ENCODE measurements at regions of chr1 and their contacts with region 1.

Region 1: GRCh38 chr1:64136752-64137411 is 66.5 kb upstream of the UBE2U start:
- DNase-seq: peak; percentile 42 to 61 (median 47)
- H3K4me3 ChIP-seq: no peak overlapping the region
- H3K4me3 Mint-ChIP-seq: no peak overlapping the region
- H3K27ac ChIP-seq: no peak overlapping the region
- H3K27ac Mint-ChIP-seq: no peak overlapping the region
- H3K4me1 ChIP-seq: no peaks in the 10 kb centered on the region
- H3K4me1 Mint-ChIP-seq: no peaks in the 10 kb centered on the region
- H3K27me3 ChIP-seq: no peaks in the 10 kb centered on the region
- H3K27me3 Mint-ChIP-seq: peaks cover under 1 to 13% of the 10 kb centered on the region in 2 donors

Region 2: DNA sequence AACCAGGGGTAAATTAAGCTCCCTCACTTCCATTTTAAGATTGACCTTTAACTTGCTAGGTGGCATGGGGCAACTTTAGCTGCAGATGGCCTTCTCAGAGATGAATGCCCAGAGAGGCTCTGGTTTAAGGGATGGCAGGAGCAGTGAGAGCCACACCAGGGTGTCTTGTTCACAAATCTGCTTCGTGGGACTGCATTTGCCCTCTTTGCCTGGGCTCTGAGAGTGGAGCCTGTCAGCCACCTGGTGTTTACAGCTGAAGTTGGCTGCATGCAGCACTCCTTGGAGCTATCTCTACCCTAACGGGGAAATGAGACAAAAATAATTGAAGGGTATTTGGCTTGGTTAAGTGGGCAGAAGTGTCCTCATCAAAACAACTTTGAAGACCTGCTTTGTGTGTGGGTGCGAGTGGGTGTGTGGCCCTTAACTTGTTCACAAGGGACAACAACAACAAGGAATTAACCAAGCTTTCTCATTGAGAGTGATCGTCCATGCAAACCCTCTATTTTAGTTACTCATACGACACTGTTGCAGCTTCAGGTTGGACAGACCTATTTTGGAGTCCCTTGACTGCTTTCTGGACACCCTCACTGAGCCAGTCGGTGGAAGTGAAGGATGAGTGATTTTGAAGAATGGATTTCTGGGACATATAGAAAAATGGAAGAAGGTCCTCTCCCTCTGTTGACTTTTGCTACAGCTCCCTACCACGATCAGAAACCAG is 513.9 kb before region 1 on chr1:
- CTCF ChIA-PET with region 1: interaction called, 18 read pairs
- POLR2A ChIA-PET with region 1: no interaction called
- intact Hi-C with region 1: no loop called
- DNase-seq: no peak
- H3K4me3 ChIP-seq: no peak overlapping the region
- H3K4me3 Mint-ChIP-seq: no peak overlapping the region
- H3K27ac ChIP-seq: no peak overlapping the region
- H3K27ac Mint-ChIP-seq: peak overlapping the region in 1 of 7 donors; percentile 29
- H3K4me1 ChIP-seq: no peaks in the 10 kb centered on the region
- H3K4me1 Mint-ChIP-seq: peaks cover 1 to 15% (median 9%) of the 10 kb centered on the region in 4 donors
- H3K27me3 ChIP-seq: no peaks in the 10 kb centered on the region
- H3K27me3 Mint-ChIP-seq: no peaks in the 10 kb centered on the region

Region 3: GRCh38 chr1:63922848-63923247 is 214.0 kb before region 1 on chr1:
- CTCF ChIA-PET with region 1: no interaction called
- POLR2A ChIA-PET with region 1: no interaction called
- intact Hi-C with region 1: no loop called
- DNase-seq: no peak
- H3K4me3 ChIP-seq: no peak overlapping the region
- H3K4me3 Mint-ChIP-seq: no peak overlapping the region
- H3K27ac ChIP-seq: no peak overlapping the region
- H3K27ac Mint-ChIP-seq: no peak overlapping the region
- H3K4me1 ChIP-seq: no peaks in the 10 kb centered on the region
- H3K4me1 Mint-ChIP-seq: no peaks in the 10 kb centered on the region
- H3K27me3 ChIP-seq: no peaks in the 10 kb centered on the region
- H3K27me3 Mint-ChIP-seq: peaks cover 0 to 5% of the 10 kb centered on the region in 2 donors

Region 4: GRCh38 chr1:64121766-64122385 is 15.0 kb before region 1 on chr1:
- CTCF ChIA-PET with region 1: interaction called, 25 read pairs
- POLR2A ChIA-PET with region 1: no interaction called
- intact Hi-C with region 1: no loop called
- DNase-seq: no peak
- H3K4me3 ChIP-seq: no peak overlapping the region
- H3K4me3 Mint-ChIP-seq: no peak overlapping the region
- H3K27ac ChIP-seq: no peak overlapping the region
- H3K27ac Mint-ChIP-seq: peak overlapping the region in 1 of 7 donors; percentile 74
- H3K4me1 ChIP-seq: no peaks in the 10 kb centered on the region
- H3K4me1 Mint-ChIP-seq: no peaks in the 10 kb centered on the region
- H3K27me3 ChIP-seq: no peaks in the 10 kb centered on the region
- H3K27me3 Mint-ChIP-seq: peaks cover 4 to 9% of the 10 kb centered on the region in 2 donors

Region 5: GRCh38 chr1:64161357-64161941 is 24.6 kb after region 1 on chr1:
- CTCF ChIA-PET with region 1: interaction called, 10 read pairs
- POLR2A ChIA-PET with region 1: no interaction called
- intact Hi-C with region 1: no loop called
- DNase-seq: no peak
- H3K4me3 ChIP-seq: no peak overlapping the region
- H3K4me3 Mint-ChIP-seq: no peak overlapping the region
- H3K27ac ChIP-seq: no peak overlapping the region
- H3K27ac Mint-ChIP-seq: no peak overlapping the region
- H3K4me1 ChIP-seq: no peaks in the 10 kb centered on the region
- H3K4me1 Mint-ChIP-seq: no peaks in the 10 kb centered on the region
- H3K27me3 ChIP-seq: no peaks in the 10 kb centered on the region
- H3K27me3 Mint-ChIP-seq: peaks cover 2 to 15% of the 10 kb centered on the region in 2 donors

Region 6: DNA sequence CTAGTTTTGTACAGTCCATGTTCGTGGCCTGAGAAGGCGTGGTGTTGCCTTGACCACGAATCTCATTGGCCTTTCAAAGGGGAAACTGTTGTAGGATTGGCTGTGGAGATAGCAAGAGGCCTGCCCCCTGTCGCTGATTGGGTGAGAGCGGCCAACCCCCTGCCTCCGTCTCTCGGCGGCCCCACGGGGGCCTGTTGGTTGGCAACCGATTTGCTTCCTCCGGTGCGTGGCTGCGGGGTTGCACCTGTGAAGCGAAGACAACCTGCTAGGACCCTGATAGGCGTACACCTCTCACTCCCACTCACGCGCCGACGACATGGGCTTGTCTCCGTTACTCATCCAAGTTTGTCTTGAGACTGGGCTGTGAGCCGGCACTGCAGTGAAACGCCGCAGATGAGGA is 66.5 kb after region 1 on chr1 and contains the start of gene UBE2U:
- CTCF ChIA-PET with region 1: no interaction called
- POLR2A ChIA-PET with region 1: no interaction called
- intact Hi-C with region 1: no loop called
- DNase-seq: no peak
- H3K4me3 ChIP-seq: no peak within 1 kb of the TSS
- H3K4me3 Mint-ChIP-seq: no peak within 1 kb of the TSS
- H3K27ac ChIP-seq: no peak within 1 kb of the TSS
- H3K27ac Mint-ChIP-seq: no peak within 1 kb of the TSS
- H3K4me1 ChIP-seq: no peaks in the 10 kb centered on the region
- H3K4me1 Mint-ChIP-seq: peaks cover 0 to 1% (median 0%) of the 10 kb centered on the region in 4 donors
- H3K27me3 ChIP-seq: no peaks in the 10 kb centered on the region
- H3K27me3 Mint-ChIP-seq: peaks cover 3 to 6% of the 10 kb centered on the region in 2 donors
- total RNA-seq, gene UBE2U: not detected

Region 7: DNA sequence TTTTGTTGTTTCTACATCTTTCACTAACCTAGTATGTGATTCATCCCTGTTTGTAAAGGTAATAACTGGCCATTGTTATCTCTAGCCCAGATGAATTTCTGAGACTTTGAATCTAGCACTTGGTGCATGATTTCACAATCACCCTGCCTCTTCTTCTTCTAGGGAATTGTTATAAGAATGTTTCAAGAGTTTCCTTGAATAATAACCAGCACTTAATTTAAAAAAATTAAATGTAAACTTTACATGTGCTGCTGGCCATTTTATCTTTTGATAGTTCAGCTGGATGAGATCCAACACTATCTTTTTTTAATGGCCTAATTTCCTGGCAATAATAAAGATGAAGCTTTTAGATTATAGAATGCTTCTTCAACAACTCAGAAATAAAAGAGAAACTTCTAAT is 98.3 kb after region 1 on chr1:
- CTCF ChIA-PET with region 1: no interaction called
- POLR2A ChIA-PET with region 1: no interaction called
- intact Hi-C with region 1: no loop called
- DNase-seq: no peak
- H3K4me3 ChIP-seq: no peak overlapping the region
- H3K4me3 Mint-ChIP-seq: no peak overlapping the region
- H3K27ac ChIP-seq: no peak overlapping the region
- H3K27ac Mint-ChIP-seq: no peak overlapping the region
- H3K4me1 ChIP-seq: no peaks in the 10 kb centered on the region
- H3K4me1 Mint-ChIP-seq: no peaks in the 10 kb centered on the region
- H3K27me3 ChIP-seq: no peaks in the 10 kb centered on the region
- H3K27me3 Mint-ChIP-seq: peaks cover 16% of the 10 kb centered on the region in 2 donors

Region 8: DNA sequence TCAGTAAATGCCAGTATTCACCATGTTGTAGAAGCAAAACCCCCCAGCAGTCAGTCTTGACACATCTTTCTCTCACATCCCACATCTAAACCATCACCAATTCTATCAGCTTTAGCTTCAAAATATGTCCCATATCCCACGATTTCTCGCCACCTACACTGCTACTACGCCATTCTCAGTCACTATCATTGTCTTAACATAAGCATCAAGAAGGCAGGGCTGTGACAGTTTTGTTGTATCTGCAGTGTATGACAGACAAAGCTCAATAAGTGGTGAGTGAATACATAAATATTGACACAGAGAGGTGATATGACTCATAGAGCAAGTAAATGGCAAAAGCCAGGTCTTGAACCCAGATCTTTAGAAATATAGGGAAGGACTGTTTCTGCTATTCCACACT is 769.6 kb after region 1 on chr1:
- CTCF ChIA-PET with region 1: no interaction called
- POLR2A ChIA-PET with region 1: no interaction called
- intact Hi-C with region 1: no loop called
- DNase-seq: no peak
- H3K4me3 ChIP-seq: no peak overlapping the region
- H3K4me3 Mint-ChIP-seq: peak overlapping the region in 5 of 8 donors; percentile 2 to 52 (median 26)
- H3K27ac ChIP-seq: no peak overlapping the region
- H3K27ac Mint-ChIP-seq: peak overlapping the region in 6 of 7 donors; percentile 2 to 46 (median 15)
- H3K4me1 ChIP-seq: peaks cover 97% of the 10 kb centered on the region
- H3K4me1 Mint-ChIP-seq: peaks cover 79 to 97% (median 90%) of the 10 kb centered on the region in 4 donors
- H3K27me3 ChIP-seq: no peaks in the 10 kb centered on the region
- H3K27me3 Mint-ChIP-seq: no peaks in the 10 kb centered on the region

Measured in CD4-positive, alpha-beta memory T cell (primary cell).